PC-3 (cell line): ENCODE measurements at regions of chr18 and their contacts with region 1.

Region 1: GRCh38 chr18:62324917-62325805 is at the start of gene TNFRSF11A:
- DNase-seq: peak; percentile 71
- ATAC-seq: peak; percentile 56
- H3K4me3 ChIP-seq: peak within 1 kb of the TSS; percentile 98
- H3K27ac ChIP-seq: peak within 1 kb of the TSS; percentile 29
- H3K4me1 ChIP-seq: peaks cover 34% of the 10 kb centered on the region
- H3K27me3 ChIP-seq: no peaks in the 10 kb centered on the region
- CTCF ChIP-seq: peak; percentile 38
- total RNA-seq, gene TNFRSF11A: 25.9 and 26.5 TPM in 2 replicates

Region 2: GRCh38 chr18:62288665-62289008 is 36.5 kb before region 1 on chr18:
- CTCF ChIA-PET with region 1: no interaction called
- POLR2A ChIA-PET with region 1: interaction called, 6 read pairs
- intact Hi-C with region 1: loop called (anchors 2 kb)
- DNase-seq: no peak
- ATAC-seq: no peak
- H3K4me3 ChIP-seq: no peak overlapping the region
- H3K27ac ChIP-seq: peak overlapping the region; percentile 28
- H3K4me1 ChIP-seq: peaks cover 26% of the 10 kb centered on the region
- H3K27me3 ChIP-seq: no peaks in the 10 kb centered on the region
- CTCF ChIP-seq: no peak

Region 3: GRCh38 chr18:62384610-62385099 is 59.5 kb after region 1 on chr18:
- CTCF ChIA-PET with region 1: no interaction called
- POLR2A ChIA-PET with region 1: interaction called, 3 read pairs
- intact Hi-C with region 1: loop called (anchors 5 kb)
- DNase-seq: peak; percentile 94
- ATAC-seq: peak; percentile 59
- H3K4me3 ChIP-seq: no peak overlapping the region
- H3K27ac ChIP-seq: peak overlapping the region; percentile 98
- H3K4me1 ChIP-seq: peaks cover 63% of the 10 kb centered on the region
- H3K27me3 ChIP-seq: no peaks in the 10 kb centered on the region
- CTCF ChIP-seq: no peak

Region 4: DNA sequence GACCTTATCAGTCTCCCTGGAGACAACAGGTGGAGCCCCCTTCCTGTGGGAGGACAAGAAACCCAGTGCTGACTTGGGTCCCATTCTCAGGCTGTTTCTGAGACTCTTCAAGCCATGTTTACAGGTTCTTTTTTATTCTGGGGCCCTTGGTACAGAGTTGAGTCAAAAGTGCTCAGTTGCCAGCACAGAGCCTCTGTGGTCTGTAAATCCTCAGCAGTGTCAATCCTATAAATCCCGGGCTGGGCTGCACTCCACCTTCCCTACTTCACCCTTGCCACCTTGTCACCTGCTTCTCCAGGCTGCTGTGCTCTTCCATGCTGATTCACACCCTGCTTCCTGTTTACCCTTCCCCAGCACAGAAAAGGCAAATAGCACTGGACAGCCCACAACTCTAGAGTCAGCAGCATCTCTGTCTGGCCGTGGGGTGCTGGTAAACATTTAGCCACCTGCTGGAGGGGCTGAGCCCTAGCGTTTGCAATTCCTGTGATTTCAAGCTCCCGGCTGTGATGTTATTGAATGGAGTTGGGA is 74.7 kb after region 1 on chr18:
- CTCF ChIA-PET with region 1: interaction called, 7 read pairs
- POLR2A ChIA-PET with region 1: no interaction called
- intact Hi-C with region 1: loop called (anchors 1 kb)
- DNase-seq: peak; percentile 93
- ATAC-seq: peak; percentile 97
- H3K4me3 ChIP-seq: no peak overlapping the region
- H3K27ac ChIP-seq: peak overlapping the region; percentile 87
- H3K4me1 ChIP-seq: peaks cover 30% of the 10 kb centered on the region
- H3K27me3 ChIP-seq: no peaks in the 10 kb centered on the region
- CTCF ChIP-seq: peak; percentile 78

Region 5: DNA sequence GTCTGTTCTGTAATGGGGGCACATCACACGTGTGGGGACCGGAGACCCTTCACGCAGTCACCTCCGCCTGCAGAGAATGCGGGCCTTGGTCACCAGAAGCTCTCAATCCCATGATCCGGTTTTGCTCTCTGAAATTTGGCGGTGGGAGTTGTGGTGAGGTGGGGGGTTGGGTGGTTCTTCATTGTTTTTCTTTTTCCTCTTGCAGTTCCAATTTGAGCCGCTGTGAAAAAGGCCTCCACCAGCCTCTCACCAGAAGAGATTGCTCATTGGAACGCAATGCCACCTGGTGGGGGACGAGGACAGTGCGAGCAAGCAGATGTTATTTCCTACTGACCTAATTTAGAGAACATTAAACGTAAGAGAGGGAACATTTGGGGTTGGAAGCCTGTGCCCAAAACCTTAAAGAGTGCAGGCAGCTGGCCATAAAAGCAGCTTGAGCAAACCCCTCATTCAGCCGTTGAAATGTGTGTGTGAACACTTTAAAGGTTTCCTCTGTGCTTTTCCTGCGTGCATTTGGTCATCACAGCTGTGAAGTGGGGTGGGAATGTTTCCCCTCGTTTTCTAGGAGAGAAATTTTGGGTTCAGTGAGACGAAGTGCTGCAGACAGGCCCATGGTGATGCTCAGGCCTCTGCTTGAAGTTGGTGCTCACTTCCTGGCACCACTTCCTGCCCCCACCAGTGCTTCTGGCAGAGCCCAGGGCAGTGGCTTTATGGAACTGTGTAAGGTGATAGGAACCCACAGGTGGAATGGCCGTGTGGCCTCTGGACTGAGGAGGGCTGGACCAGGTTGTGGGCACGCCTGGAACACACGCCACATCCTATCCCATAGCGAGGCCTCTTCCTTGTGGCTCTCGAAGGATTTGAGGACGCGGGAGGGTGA is 259.3 kb after region 1 on chr18:
- CTCF ChIA-PET with region 1: interaction called, 4 read pairs
- POLR2A ChIA-PET with region 1: no interaction called
- intact Hi-C with region 1: loop called (anchors 5 kb)
- DNase-seq: peak; percentile 90
- ATAC-seq: peak; percentile 83
- H3K4me3 ChIP-seq: no peak overlapping the region
- H3K27ac ChIP-seq: no peak overlapping the region
- H3K4me1 ChIP-seq: peaks cover 4% of the 10 kb centered on the region
- H3K27me3 ChIP-seq: no peaks in the 10 kb centered on the region
- CTCF ChIP-seq: peak; percentile 97